ENCODE measurements at regions of chr11 and their contacts with region 1.

Region 1: DNA sequence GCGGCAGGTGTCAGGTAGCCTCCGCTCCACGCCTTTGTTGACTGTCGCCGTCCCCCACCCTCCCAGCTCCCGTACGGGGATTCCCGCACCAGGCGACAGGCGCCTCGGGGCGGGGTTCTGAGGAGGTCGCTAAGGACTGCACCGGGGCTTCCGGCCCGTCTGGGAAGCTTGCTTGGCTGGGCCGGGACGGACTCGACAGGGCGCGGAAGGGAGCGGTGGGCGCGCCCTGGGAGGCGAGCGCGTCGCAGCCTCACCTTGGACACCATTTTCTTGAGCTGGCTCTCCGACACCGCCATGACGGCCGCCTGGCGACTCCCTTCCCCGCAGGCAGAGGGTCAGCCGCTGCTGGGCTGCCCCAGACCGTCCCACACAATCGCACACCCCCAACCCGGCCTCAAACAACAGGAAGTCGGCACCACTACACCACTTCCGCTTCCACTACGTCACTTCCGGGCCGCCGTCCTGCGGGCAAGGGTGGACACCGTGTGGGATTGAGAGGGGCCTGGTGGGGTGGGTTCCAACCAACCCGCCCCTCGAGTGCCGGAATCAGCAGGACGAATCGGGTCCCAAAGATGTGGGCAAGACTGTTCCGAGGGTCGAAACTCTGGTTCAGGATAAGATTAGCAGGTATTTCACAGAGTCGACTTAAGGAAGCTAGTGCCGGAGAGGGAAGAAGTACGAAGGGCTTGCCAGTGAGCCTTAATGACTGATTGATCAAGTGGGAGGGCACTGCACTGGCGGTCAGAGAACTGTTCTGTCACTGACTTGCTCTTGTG is at the start of gene TSG101:
- DNase-seq: peak; percentile 82 to 95 (median 89)
- ATAC-seq: peak; percentile 89 to 91 (median 90)
- H3K4me3 ChIP-seq: peak within 1 kb of the TSS; percentile 84 to 94
- H3K4me3 Mint-ChIP-seq: peak within 1 kb of the TSS; percentile 97 to 100 (median 100)
- H3K27ac ChIP-seq: peak within 1 kb of the TSS; percentile 100
- H3K27ac Mint-ChIP-seq: peak within 1 kb of the TSS; percentile 100
- H3K4me1 ChIP-seq: peaks cover 10 to 24% of the 10 kb centered on the region in 2 experiments
- H3K4me1 Mint-ChIP-seq: peaks cover 54 to 59% (median 56%) of the 10 kb centered on the region in 3 donors
- H3K27me3 ChIP-seq: no peaks in the 10 kb centered on the region
- H3K27me3 Mint-ChIP-seq: peaks cover 0 to 2% of the 10 kb centered on the region in 2 donors
- total RNA-seq, gene TSG101: 13.6 to 38.8 (median 36.1) TPM

Region 2: DNA sequence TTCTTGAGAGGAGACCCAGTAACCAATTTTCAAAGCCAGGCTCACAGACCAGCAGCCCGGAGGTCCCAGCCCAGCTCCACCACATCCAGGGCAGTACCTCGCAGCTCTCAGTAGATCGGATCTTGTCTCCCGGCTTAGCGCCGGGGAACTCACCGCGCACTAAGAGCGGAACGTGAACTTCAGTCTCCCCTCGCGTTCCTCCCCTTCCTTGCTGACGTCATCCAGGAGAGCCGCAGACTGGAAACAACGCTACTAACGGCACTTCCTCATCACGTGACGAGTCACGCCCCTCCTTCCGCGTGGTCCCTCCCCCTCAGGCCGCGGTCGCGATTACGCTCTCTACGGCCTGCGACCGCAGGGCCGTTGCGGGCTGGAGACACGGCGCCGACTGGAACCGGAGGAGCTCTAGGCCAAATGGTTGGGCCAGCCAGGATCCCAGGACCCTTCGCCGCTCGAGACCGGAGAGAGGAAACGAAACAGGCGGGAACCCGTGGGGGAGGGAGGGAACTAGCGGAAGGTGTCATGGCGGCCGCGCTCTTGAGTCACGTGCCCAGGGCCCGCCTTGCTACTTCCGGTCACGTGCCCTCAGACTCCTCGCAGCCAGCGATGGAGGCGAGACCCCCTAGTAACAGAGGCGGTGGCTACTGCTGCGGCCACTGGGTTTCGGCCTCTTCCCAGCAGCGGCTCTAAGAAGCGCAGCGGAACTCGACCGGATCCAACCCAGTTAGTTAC is 204.6 kb before region 1 on chr11 and contains the starts of genes GTF2H1 and HPS5:
- CTCF ChIA-PET with region 1: no interaction called
- POLR2A ChIA-PET with region 1: interaction called in 1 of 2 experiments, 15 read pairs
- DNase-seq: peak; percentile 92 to 99 (median 96)
- ATAC-seq: peak; percentile 89 to 91 (median 90)
- H3K4me3 ChIP-seq: peak within 1 kb of the TSS; percentile 77 to 93
- H3K4me3 Mint-ChIP-seq: peak within 1 kb of the TSS; percentile 97 to 99 (median 98)
- H3K27ac ChIP-seq: peak within 1 kb of the TSS; percentile 98
- H3K27ac Mint-ChIP-seq: peak within 1 kb of the TSS; percentile 100
- H3K4me1 ChIP-seq: peaks cover 21 to 32% of the 10 kb centered on the region in 2 experiments
- H3K4me1 Mint-ChIP-seq: peaks cover 77 to 82% (median 79%) of the 10 kb centered on the region in 3 donors
- H3K27me3 ChIP-seq: no peaks in the 10 kb centered on the region
- H3K27me3 Mint-ChIP-seq: no peaks in the 10 kb centered on the region
- total RNA-seq, gene GTF2H1: 25.9 to 44.8 (median 37.5) TPM
- total RNA-seq, gene HPS5: 12.9 to 17.9 (median 14.3) TPM

Region 3: GRCh38 chr11:18395735-18396504 is 130.8 kb before region 1 on chr11:
- CTCF ChIA-PET with region 1: no interaction called
- POLR2A ChIA-PET with region 1: interaction called, 8 to 20 read pairs
- DNase-seq: peak; percentile 83 to 97 (median 90)
- ATAC-seq: peak; percentile 67 to 75 (median 72)
- H3K4me3 ChIP-seq: peak overlapping the region; percentile 85 to 97
- H3K4me3 Mint-ChIP-seq: peak overlapping the region; percentile 97 to 99 (median 98)
- H3K27ac ChIP-seq: peak overlapping the region; percentile 80
- H3K27ac Mint-ChIP-seq: peak overlapping the region; percentile 95
- H3K4me1 ChIP-seq: peaks cover 7 to 40% of the 10 kb centered on the region in 2 experiments
- H3K4me1 Mint-ChIP-seq: peaks cover 35 to 55% (median 35%) of the 10 kb centered on the region in 3 donors
- H3K27me3 ChIP-seq: no peaks in the 10 kb centered on the region
- H3K27me3 Mint-ChIP-seq: no peaks in the 10 kb centered on the region

Region 4: GRCh38 chr11:18540207-18541009 is 13.7 kb after region 1 on chr11:
- CTCF ChIA-PET with region 1: interaction called, 3 to 11 read pairs
- POLR2A ChIA-PET with region 1: interaction called in 1 of 2 experiments, 3 read pairs
- DNase-seq: peak in 1 of 35 experiments; percentile 65
- ATAC-seq: peak; percentile 58 to 68 (median 61)
- H3K4me3 ChIP-seq: no peak overlapping the region
- H3K4me3 Mint-ChIP-seq: no peak overlapping the region
- H3K27ac ChIP-seq: no peak overlapping the region
- H3K27ac Mint-ChIP-seq: peak overlapping the region in 1 of 2 donors; percentile 29
- H3K4me1 ChIP-seq: no peaks in the 10 kb centered on the region
- H3K4me1 Mint-ChIP-seq: peaks cover 0 to 1% (median 1%) of the 10 kb centered on the region in 3 donors
- H3K27me3 ChIP-seq: no peaks in the 10 kb centered on the region
- H3K27me3 Mint-ChIP-seq: no peaks in the 10 kb centered on the region

Region 5: DNA sequence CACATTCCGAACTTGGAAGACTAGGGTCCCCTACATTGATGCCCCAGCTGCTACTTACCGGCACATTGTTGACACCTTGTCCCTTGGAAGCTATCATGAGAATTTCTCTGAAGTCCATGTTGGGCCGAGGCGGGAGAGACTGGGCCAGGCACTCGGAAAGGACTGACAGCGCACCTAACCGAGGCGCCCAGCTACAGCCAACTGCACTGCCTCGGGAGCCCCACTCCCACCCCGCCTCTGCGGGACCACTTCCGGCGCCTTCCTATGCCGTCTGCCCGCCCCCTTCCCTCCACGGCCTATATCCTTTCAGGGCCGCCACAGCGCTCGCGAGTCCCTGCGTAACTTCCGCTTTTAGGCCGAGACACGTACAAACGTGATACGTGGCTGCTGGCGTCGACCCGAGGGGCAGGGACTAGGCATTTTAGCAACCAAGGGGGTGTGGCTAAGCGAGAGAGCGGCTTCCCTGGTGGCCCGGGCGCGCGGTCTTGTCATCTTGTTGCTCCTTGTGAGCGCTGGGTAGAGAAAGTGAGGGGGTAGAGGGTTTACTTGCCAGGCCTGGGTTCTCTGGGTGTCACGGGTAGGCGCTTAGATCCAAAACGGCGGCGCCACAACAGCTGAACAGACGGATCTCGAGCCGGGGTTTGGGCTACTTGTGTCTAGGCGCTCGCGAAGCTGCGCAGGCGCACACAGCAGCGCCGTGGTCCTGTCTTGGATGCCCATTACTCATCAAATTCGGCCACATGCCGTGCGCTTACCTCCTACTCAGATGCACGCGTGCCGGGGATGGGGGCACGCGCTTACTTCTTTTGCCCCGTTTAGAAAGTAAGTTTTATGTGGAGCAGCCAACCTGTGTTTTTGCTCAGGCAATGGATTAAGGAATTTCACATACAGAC is 107.7 kb after region 1 on chr11 and contains the start of gene SPTY2D1:
- CTCF ChIA-PET with region 1: interaction called in 1 of 2 experiments, 7 read pairs
- POLR2A ChIA-PET with region 1: interaction called, 3 to 19 read pairs
- DNase-seq: peak; percentile 91 to 99 (median 99)
- ATAC-seq: peak; percentile 96 to 99 (median 98)
- H3K4me3 ChIP-seq: peak within 1 kb of the TSS; percentile 68 to 100
- H3K4me3 Mint-ChIP-seq: peak within 1 kb of the TSS; percentile 88 to 97 (median 93)
- H3K27ac ChIP-seq: peak within 1 kb of the TSS; percentile 94
- H3K27ac Mint-ChIP-seq: peak within 1 kb of the TSS; percentile 99 to 100
- H3K4me1 ChIP-seq: peaks cover 9 to 21% of the 10 kb centered on the region in 2 experiments
- H3K4me1 Mint-ChIP-seq: peaks cover 27 to 35% (median 34%) of the 10 kb centered on the region in 3 donors
- H3K27me3 ChIP-seq: no peaks in the 10 kb centered on the region
- H3K27me3 Mint-ChIP-seq: peaks cover 0 to 4% of the 10 kb centered on the region in 2 donors
- total RNA-seq, gene SPTY2D1: 18.2 to 46.2 (median 22.2) TPM

Region 6: DNA sequence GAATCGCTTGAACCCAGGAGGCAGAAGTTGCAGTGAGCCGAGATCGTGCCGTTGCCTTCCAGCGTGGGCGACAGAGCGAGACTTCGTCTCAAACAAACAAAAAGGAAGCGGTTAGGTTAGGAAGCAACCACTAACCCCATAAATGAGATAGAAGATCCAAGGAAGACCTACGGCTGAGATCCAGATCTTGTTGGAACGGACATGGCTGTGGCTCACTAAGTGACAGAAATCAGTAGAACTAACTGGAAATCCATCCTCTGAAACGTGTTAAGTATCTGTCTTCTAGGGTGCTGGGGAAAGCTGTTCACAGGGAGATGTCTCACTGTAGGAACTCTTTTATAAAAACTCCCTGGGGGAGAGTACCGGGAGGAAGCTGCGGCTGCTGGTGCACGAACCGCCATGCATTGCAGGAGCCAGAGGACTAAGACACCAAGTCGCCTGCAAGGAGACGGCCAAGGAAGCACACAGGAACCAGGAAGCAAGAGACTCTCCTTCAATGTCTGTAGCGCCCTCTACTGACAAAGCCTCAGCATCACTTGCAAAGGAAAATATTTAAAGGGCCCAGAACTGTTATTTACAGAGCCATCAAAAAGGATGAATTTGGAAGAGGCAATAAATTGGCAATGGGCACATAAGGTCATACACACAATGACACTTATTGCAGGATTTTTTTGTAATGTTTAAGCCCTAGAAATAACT is 124.3 kb after region 1 on chr11:
- CTCF ChIA-PET with region 1: interaction called, 5 to 12 read pairs
- POLR2A ChIA-PET with region 1: no interaction called
- DNase-seq: peak in 12 of 35 experiments; percentile 5 to 69 (median 16)
- ATAC-seq: peak in 1 of 4 experiments; percentile 40
- H3K4me3 ChIP-seq: no peak overlapping the region
- H3K4me3 Mint-ChIP-seq: no peak overlapping the region
- H3K27ac ChIP-seq: no peak overlapping the region
- H3K27ac Mint-ChIP-seq: peak overlapping the region in 1 of 2 donors; percentile 12
- H3K4me1 ChIP-seq: no peaks in the 10 kb centered on the region
- H3K4me1 Mint-ChIP-seq: peaks cover 0 to 7% (median 3%) of the 10 kb centered on the region in 3 donors
- H3K27me3 ChIP-seq: no peaks in the 10 kb centered on the region
- H3K27me3 Mint-ChIP-seq: no peaks in the 10 kb centered on the region

Region 7: GRCh38 chr11:20197881-20198280 is 1671.2 kb after region 1 on chr11:
- CTCF ChIA-PET with region 1: no interaction called
- POLR2A ChIA-PET with region 1: no interaction called
- DNase-seq: no peak
- ATAC-seq: no peak
- H3K4me3 ChIP-seq: no peak overlapping the region
- H3K4me3 Mint-ChIP-seq: no peak overlapping the region
- H3K27ac ChIP-seq: no peak overlapping the region
- H3K27ac Mint-ChIP-seq: no peak overlapping the region
- H3K4me1 ChIP-seq: no peaks in the 10 kb centered on the region
- H3K4me1 Mint-ChIP-seq: peaks cover 0 to 4% (median 2%) of the 10 kb centered on the region in 3 donors
- H3K27me3 ChIP-seq: peaks cover 5 to 10% of the 10 kb centered on the region in 2 experiments
- H3K27me3 Mint-ChIP-seq: peaks cover 26 to 35% of the 10 kb centered on the region in 2 donors